Posterior cingulate gyrus (tissue), 11 donors: ENCODE measurements at regions of chr12 and their contacts with region 1.

Region 1: GRCh38 chr12:81274637-81275529 is 197.0 kb downstream of the ACSS3 start:
- DNase-seq: no peak

Region 2: GRCh38 chr12:80966002-80966401 is 308.9 kb before region 1 on chr12:
- intact Hi-C with region 1: no loop called
- DNase-seq: no peak

Region 3: DNA sequence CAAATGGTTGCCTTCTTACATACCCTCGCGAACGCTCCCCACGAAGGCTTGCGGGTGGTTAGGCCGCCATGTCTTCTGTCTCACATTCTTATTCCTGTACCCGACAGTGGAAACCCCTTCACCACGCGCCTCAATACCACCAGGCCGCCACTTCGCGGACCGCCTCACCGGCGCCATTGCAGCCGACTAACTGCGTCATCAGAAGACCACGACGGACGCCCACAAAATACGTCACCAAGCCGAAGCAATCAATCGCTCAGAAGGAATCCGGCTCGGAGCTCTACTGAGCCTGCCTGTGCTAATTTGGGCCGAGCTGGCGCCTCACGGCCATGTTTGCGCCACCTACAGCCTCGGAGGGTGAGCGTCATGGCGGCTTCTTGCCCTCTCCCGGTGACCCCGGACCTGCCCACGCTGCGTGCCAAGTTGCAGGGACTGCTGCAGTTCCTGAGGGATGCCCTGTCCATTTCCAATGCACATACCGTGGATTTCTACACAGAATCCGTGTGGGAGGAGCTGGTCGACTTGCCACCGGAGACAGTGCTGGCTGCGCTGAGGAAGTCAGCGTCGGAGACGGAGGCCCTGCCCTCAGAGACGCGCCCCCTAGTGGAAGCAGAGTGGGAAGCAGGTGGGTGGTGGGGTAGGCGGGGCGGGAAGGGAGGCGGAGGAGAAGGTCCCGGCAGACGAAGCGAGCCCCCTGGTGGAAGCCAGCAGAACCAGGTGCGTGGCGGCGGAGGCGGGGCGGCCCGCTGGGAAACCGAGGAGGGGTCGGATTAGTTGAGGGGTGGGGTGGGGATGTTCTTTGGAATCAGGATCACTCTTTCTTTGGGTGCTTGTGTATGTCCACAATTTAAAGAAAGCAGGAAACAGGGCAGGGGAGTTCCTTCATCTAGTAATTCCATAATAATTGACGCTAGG is 1083.6 kb after region 1 on chr12 and contains the starts of genes CCDC59 and METTL25:
- intact Hi-C with region 1: loop called (anchors 10 kb)
- DNase-seq: peak; percentile 94 to 99 (median 98)